CD8-positive, alpha-beta memory T cell (primary cell): ENCODE measurements at regions of chr12 and their contacts with region 1.

Region 1: GRCh38 chr12:101773650-101774162 is 34.4 kb upstream of the SYCP3 start:
- DNase-seq: peak; percentile 43 to 75 (median 62)
- H3K4me3 ChIP-seq: no peak overlapping the region
- H3K4me3 Mint-ChIP-seq: no peak overlapping the region
- H3K27ac ChIP-seq: no peak overlapping the region
- H3K27ac Mint-ChIP-seq: peak overlapping the region in 1 of 8 donors; percentile 43
- H3K4me1 ChIP-seq: no peaks in the 10 kb centered on the region
- H3K4me1 Mint-ChIP-seq: peaks cover 0 to 7% (median 1%) of the 10 kb centered on the region in 3 donors
- H3K27me3 ChIP-seq: no peaks in the 10 kb centered on the region
- H3K27me3 Mint-ChIP-seq: no peaks in the 10 kb centered on the region

Region 2: GRCh38 chr12:101759396-101760047 is 14.2 kb before region 1 on chr12:
- CTCF ChIA-PET with region 1: interaction called, 13 read pairs
- POLR2A ChIA-PET with region 1: interaction called, 3 read pairs
- DNase-seq: peak in 2 of 5 donors; percentile 17 to 22
- H3K4me3 ChIP-seq: no peak overlapping the region
- H3K4me3 Mint-ChIP-seq: no peak overlapping the region
- H3K27ac ChIP-seq: no peak overlapping the region
- H3K27ac Mint-ChIP-seq: no peak overlapping the region
- H3K4me1 ChIP-seq: no peaks in the 10 kb centered on the region
- H3K4me1 Mint-ChIP-seq: peaks cover 0 to 5% (median 0%) of the 10 kb centered on the region in 3 donors
- H3K27me3 ChIP-seq: no peaks in the 10 kb centered on the region
- H3K27me3 Mint-ChIP-seq: no peaks in the 10 kb centered on the region

Region 3: GRCh38 chr12:101823891-101824290 is 50.2 kb after region 1 on chr12:
- CTCF ChIA-PET with region 1: interaction called, 58 read pairs
- POLR2A ChIA-PET with region 1: no interaction called
- DNase-seq: peak; percentile 46 to 85 (median 75)
- H3K4me3 ChIP-seq: no peak overlapping the region
- H3K4me3 Mint-ChIP-seq: peak overlapping the region; percentile 7 to 80 (median 74)
- H3K27ac ChIP-seq: no peak overlapping the region
- H3K27ac Mint-ChIP-seq: peak overlapping the region; percentile 51 to 99 (median 84)
- H3K4me1 ChIP-seq: peaks cover 61% of the 10 kb centered on the region
- H3K4me1 Mint-ChIP-seq: peaks cover 63 to 85% (median 73%) of the 10 kb centered on the region in 3 donors
- H3K27me3 ChIP-seq: no peaks in the 10 kb centered on the region
- H3K27me3 Mint-ChIP-seq: no peaks in the 10 kb centered on the region

Region 4: DNA sequence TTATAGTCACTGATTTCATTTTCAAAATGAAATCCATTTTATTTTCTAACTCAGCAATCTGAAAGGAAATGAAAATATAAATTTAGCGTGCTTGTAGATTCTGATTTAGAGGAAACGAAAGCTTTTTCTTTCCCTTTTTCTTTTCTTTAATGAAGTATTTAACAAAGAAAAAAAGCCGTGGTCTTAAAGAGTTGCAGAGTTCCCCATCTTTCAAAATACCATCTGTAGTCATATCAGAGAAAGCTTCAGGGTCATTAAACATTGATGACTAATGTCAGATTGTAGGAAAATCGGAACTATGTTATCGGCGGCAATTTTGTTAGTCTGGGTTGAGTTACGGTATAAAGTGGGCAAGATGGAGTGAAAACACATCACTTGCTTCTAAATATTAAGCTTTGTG is 135.9 kb after region 1 on chr12:
- CTCF ChIA-PET with region 1: no interaction called
- POLR2A ChIA-PET with region 1: no interaction called
- DNase-seq: no peak
- H3K4me3 ChIP-seq: no peak overlapping the region
- H3K4me3 Mint-ChIP-seq: peak overlapping the region in 6 of 7 donors; percentile 32 to 66 (median 63)
- H3K27ac ChIP-seq: no peak overlapping the region
- H3K27ac Mint-ChIP-seq: no peak overlapping the region
- H3K4me1 ChIP-seq: no peaks in the 10 kb centered on the region
- H3K4me1 Mint-ChIP-seq: peaks cover 0 to 5% (median 0%) of the 10 kb centered on the region in 3 donors
- H3K27me3 ChIP-seq: no peaks in the 10 kb centered on the region
- H3K27me3 Mint-ChIP-seq: peaks cover 0 to 1% of the 10 kb centered on the region in 2 donors